ENCODE measurements at regions of chr5 and their contacts with region 1.

Region 1: DNA sequence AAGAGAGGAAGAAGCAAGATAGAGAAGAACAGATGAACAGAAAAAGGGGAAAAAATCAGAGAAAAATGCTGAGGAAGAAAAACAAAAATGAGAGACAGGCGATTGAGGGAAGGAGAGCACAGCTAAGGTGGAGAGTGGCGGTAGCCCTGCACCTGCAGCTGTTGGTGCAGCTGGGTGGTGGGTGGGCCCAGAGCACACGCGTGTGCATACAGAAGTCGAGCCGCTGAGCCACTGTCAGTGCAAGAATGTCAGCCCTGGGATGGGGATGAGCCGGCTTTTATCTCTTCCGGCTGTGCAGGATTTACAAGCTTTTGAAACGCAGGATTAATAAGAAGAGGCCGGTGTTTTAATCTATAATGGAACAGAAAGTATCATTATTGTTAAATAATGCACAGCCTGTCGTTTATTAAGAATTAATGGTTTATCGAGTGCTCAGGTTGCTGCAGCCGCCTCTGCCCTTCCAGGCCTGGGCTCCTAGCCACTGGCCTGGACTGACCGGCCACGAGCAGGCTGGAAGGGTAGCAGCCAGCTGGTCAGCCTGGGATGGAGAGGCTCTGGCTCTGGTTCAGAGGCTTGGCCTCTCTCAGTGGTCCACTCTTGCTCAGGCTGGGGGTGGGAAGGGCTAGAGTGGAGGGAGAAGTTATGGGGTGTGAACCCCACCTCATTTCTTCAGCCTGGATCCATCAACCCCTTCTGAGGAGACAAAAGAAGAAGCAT is 68.7 kb downstream of the PCDH1 start:
- DNase-seq: no peak

Region 2: GRCh38 chr5:141795421-141795820 is 14.1 kb before region 1 on chr5:
- intact Hi-C with region 1: loop called in 1 of 2 experiments (anchors 1 kb)
- DNase-seq: no peak